Colonic mucosa (tissue), 4 donors: ENCODE measurements at regions of chr19 and their contacts with region 1.

Region 1: DNA sequence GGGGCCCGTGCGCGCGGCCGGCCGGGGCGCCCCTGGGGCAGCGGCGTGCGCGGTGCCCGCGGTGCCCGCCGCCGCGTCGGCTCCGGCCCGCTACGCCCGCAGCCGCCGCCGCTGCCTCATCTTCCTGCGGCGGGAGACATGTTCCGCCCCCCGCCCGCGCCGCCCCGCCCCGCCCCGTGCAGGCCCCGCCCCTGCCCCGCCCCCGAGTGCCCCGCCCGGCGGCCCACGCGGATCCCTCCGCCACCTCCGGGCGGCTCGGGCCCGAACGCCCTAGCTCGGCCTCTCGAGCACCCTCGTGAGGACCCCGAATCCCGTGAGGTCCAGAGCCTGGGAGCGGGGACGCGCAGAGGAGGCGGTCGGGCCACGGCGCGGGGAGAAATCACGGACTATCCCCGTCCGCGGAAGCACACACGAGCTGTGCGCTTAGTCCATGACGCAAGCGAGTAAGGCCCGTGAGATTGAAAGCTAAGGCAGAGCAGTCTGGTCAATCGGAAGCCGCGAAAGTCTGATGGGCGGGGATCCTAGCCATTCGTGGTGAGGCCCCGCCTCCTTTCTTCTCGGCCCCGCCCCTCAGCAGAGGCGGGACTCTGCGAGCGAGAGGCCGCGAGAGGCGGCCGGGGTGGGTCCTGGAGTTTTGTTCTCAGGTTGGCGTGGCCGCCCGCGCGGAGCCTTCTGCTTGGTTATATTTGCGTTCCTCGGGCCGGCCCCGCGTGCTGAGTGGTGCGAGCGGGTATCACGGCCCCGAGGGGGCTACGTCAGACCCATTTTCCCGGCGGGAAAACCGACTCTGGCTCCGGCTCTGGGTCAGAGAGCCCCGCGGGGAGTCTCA is at the start of gene TCF3:
- DNase-seq: peak; percentile 98
- H3K4me3 ChIP-seq: peak within 1 kb of the TSS; percentile 97
- H3K27ac ChIP-seq: peak within 1 kb of the TSS; percentile 96
- H3K4me1 ChIP-seq: peaks cover 4% of the 10 kb centered on the region
- H3K27me3 ChIP-seq: no peaks in the 10 kb centered on the region
- CTCF ChIP-seq: no peak
- total RNA-seq, gene TCF3: 64.2 to 114 TPM

Region 2: GRCh38 chr19:1438035-1438932 is 214.4 kb before region 1 on chr19 and contains the start of gene RPS15:
- intact Hi-C with region 1: no loop called
- DNase-seq: peak; percentile 96
- H3K4me3 ChIP-seq: peak within 1 kb of the TSS; percentile 73
- H3K27ac ChIP-seq: peak within 1 kb of the TSS; percentile 66
- H3K4me1 ChIP-seq: peaks cover 7% of the 10 kb centered on the region
- H3K27me3 ChIP-seq: no peaks in the 10 kb centered on the region
- CTCF ChIP-seq: peak; percentile 95
- total RNA-seq, gene RPS15: 1,055 to 1,445 TPM

Region 3: GRCh38 chr19:1618157-1619093 is 34.3 kb before region 1 on chr19:
- intact Hi-C with region 1: loop called (anchors 5 kb)
- DNase-seq: peak; percentile 51
- H3K4me3 ChIP-seq: no peak overlapping the region
- H3K27ac ChIP-seq: no peak overlapping the region
- H3K4me1 ChIP-seq: no peaks in the 10 kb centered on the region
- H3K27me3 ChIP-seq: no peaks in the 10 kb centered on the region
- CTCF ChIP-seq: peak; percentile 32